Activated CD8-positive, alpha-beta T cell treated with anti-CD3 and anti-CD28 coated beads for 36 hours (primary cell): ENCODE measurements at regions of chr21 and their contacts with region 1.

Region 1: GRCh38 chr21:42337830-42338728 is 12.7 kb downstream of the TFF2 start:
- DNase-seq: peak; percentile 94
- ATAC-seq: peak; percentile 99
- H3K4me3 Mint-ChIP-seq: no peak overlapping the region
- H3K27ac Mint-ChIP-seq: peak overlapping the region; percentile 63
- H3K4me1 Mint-ChIP-seq: peaks cover 17% of the 10 kb centered on the region
- H3K27me3 Mint-ChIP-seq: no peaks in the 10 kb centered on the region
- CTCF ChIP-seq: peak; percentile 91

Region 2: GRCh38 chr21:42093991-42094421 is 244.1 kb before region 1 on chr21:
- CTCF ChIA-PET with region 1: no interaction called
- POLR2A ChIA-PET with region 1: no interaction called
- intact Hi-C with region 1: no loop called
- DNase-seq: no peak
- ATAC-seq: no peak
- H3K4me3 Mint-ChIP-seq: no peak overlapping the region
- H3K27ac Mint-ChIP-seq: no peak overlapping the region
- H3K4me1 Mint-ChIP-seq: peaks cover 6% of the 10 kb centered on the region
- H3K27me3 Mint-ChIP-seq: no peaks in the 10 kb centered on the region
- CTCF ChIP-seq: no peak

Region 3: GRCh38 chr21:42309753-42310221 is 28.3 kb before region 1 on chr21:
- CTCF ChIA-PET with region 1: interaction called, 47 read pairs
- POLR2A ChIA-PET with region 1: no interaction called
- intact Hi-C with region 1: no loop called
- DNase-seq: peak; percentile 86
- ATAC-seq: peak; percentile 93
- H3K4me3 Mint-ChIP-seq: no peak overlapping the region
- H3K27ac Mint-ChIP-seq: no peak overlapping the region
- H3K4me1 Mint-ChIP-seq: peaks cover 2% of the 10 kb centered on the region
- H3K27me3 Mint-ChIP-seq: no peaks in the 10 kb centered on the region
- CTCF ChIP-seq: peak; percentile 90

Region 4: DNA sequence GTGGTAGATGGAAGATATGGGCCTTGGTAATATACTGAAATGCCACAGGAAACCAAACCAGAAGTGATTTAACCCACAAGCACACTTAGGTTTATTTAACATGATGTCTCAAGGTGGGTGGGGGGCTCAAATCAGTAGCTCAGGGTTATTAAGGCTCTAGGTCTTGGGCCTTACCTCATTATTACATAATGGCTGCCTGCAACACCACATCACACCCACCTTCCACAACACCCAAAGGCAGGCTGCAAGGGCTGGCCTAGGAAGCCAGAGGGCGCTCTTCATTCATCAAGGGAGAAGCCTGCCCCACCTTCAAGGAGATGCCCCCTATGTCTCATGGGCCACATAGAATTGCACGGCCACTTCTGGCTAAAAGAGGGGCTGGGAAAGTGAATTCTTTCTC is 22.2 kb after region 1 on chr21:
- CTCF ChIA-PET with region 1: interaction called, 10 read pairs
- POLR2A ChIA-PET with region 1: interaction called, 3 read pairs
- intact Hi-C with region 1: no loop called
- DNase-seq: peak; percentile 55
- ATAC-seq: peak; percentile 65
- H3K4me3 Mint-ChIP-seq: no peak overlapping the region
- H3K27ac Mint-ChIP-seq: no peak overlapping the region
- H3K4me1 Mint-ChIP-seq: peaks cover 7% of the 10 kb centered on the region
- H3K27me3 Mint-ChIP-seq: no peaks in the 10 kb centered on the region
- CTCF ChIP-seq: peak; percentile 45

Region 5: DNA sequence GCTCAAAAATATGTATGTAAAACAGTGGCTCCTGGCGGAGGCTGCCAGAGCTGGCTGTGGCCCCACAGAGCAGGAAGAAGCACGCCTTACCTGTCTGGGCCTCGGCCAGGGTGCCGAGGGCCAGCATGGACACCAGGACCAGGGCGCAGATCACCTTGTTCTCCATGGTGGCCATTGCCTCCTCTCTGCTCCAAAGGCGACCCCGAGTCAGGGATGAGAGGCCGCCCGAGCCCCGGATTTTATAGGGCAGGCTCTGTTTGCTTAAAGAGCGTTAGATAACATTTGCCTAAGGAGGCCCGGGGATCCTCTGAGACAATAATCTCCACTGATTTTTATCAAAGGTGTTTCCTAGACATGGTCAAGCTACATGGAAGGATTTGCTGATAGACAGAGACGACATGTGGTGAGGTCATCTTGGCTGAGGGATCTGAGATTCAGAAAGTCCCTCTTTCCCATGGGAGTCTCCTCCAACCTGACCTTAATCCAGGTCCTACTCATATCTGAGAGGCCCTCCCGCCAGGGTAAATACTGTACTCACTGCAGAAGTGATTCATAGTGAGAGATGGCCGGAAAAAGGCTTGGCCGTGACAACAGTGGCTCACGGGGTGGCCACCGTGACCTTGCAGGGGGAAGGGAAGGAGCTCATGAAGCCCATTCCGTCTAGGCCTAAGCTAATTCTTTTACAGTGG is 28.4 kb after region 1 on chr21 and contains the start of gene TFF1:
- CTCF ChIA-PET with region 1: interaction called, 15 read pairs
- POLR2A ChIA-PET with region 1: interaction called, 5 read pairs
- intact Hi-C with region 1: no loop called
- DNase-seq: no peak
- ATAC-seq: no peak
- H3K4me3 Mint-ChIP-seq: no peak within 1 kb of the TSS
- H3K27ac Mint-ChIP-seq: peak within 1 kb of the TSS; percentile 32
- H3K4me1 Mint-ChIP-seq: peaks cover 24% of the 10 kb centered on the region
- H3K27me3 Mint-ChIP-seq: no peaks in the 10 kb centered on the region
- CTCF ChIP-seq: no peak
- total RNA-seq, gene TFF1: 1.1 TPM in 1 of 2 experiments, not detected in the other

Region 6: GRCh38 chr21:42381334-42381984 is 43.4 kb after region 1 on chr21:
- CTCF ChIA-PET with region 1: interaction called, 13 read pairs
- POLR2A ChIA-PET with region 1: interaction called, 3 read pairs
- intact Hi-C with region 1: no loop called
- DNase-seq: peak; percentile 53
- ATAC-seq: peak; percentile 68
- H3K4me3 Mint-ChIP-seq: no peak overlapping the region
- H3K27ac Mint-ChIP-seq: no peak overlapping the region
- H3K4me1 Mint-ChIP-seq: peaks cover 20% of the 10 kb centered on the region
- H3K27me3 Mint-ChIP-seq: no peaks in the 10 kb centered on the region
- CTCF ChIP-seq: peak; percentile 70

Region 7: GRCh38 chr21:42392721-42393442 is 54.8 kb after region 1 on chr21:
- CTCF ChIA-PET with region 1: interaction called, 13 read pairs
- POLR2A ChIA-PET with region 1: no interaction called
- intact Hi-C with region 1: no loop called
- DNase-seq: peak; percentile 41
- ATAC-seq: peak; percentile 94
- H3K4me3 Mint-ChIP-seq: peak overlapping the region; percentile 65
- H3K27ac Mint-ChIP-seq: peak overlapping the region; percentile 88
- H3K4me1 Mint-ChIP-seq: peaks cover 77% of the 10 kb centered on the region
- H3K27me3 Mint-ChIP-seq: no peaks in the 10 kb centered on the region
- CTCF ChIP-seq: no peak

Region 8: DNA sequence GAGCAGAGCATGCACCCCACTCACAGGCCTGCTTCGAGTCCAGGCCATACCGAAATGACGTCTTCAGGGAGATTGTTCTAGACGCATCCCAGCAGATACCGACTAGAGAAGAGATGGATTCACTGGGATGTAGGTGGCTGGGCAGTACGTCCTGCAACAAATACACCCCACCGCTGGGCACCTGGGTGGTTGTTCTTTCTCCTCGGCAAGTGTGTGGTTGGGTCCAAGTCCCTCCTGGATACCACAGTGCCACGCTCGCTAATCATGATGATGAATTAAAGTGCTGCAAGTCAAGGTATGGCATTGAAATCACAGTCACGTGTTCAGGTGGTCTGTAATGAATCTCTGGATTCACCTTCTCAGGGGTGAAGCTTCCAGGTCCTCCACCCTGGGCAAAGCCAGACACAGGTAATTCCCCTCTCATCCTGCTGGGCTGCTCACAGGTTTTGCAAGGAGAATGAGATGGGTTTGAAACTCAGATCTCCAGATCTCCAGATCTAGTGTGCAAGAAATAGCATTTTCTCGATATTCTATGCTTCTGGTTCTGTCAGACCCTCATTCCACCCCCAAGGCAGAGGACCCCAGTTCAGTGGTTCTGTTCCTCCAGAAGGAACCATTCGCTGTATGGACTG is 111.3 kb after region 1 on chr21:
- CTCF ChIA-PET with region 1: interaction called, 39 read pairs
- POLR2A ChIA-PET with region 1: interaction called, 4 read pairs
- intact Hi-C with region 1: loop called (anchors 5 kb)
- DNase-seq: no peak
- ATAC-seq: no peak
- H3K4me3 Mint-ChIP-seq: no peak overlapping the region
- H3K27ac Mint-ChIP-seq: peak overlapping the region; percentile 84
- H3K4me1 Mint-ChIP-seq: peaks cover 57% of the 10 kb centered on the region
- H3K27me3 Mint-ChIP-seq: no peaks in the 10 kb centered on the region
- CTCF ChIP-seq: no peak